ENCODE measurements at regions of chr1 and their contacts with region 1.

Region 1: DNA sequence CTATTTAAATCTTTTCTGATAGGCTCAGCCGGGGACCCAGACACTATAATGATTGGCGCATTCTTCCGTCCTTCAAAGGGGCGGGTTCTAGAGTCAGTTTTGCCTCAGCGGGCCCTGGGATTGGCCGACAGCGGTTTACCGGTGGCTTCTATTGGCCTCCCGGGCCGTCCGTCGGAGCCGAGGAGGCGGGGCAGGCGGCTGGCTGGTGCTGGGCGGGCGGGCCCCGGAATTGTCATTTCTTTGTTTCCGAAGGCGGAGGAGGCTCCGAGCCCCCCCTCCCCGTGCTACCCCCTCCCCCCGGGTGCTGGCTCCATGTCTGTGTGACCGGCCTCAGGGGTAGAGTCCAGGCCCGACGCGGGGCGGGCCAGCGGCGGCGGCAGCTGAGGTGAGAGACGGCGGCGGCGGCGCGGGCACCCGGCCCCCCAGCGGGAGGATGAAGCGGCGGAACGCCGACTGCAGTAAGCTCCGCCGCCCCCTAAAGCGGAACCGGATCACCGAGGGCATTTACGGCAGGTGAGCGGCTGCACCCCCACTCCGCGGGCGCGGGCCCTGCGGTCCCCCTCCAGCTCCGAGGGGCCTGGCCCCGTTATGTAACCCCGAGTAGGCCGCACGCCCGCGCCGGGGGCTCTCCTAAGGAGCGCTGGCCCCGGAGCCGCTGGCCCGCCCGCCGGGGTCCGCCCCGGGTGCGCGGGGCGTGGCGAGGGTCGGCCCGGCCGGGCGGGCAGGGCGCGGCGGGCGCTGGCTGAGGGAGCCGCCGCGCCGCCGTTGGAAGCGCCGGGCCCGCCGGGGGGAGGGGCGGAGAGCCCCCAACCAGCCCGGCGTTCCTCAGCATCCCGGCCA is at the start of gene MACO1:
- DNase-seq: peak; percentile 97 to 98 (median 97)
- ATAC-seq: peak; percentile 96 to 98 (median 97)
- H3K4me3 ChIP-seq: peak within 1 kb of the TSS; percentile 82 to 99 (median 92)
- H3K27ac ChIP-seq: peak within 1 kb of the TSS; percentile 78 to 97 (median 94)
- H3K4me1 ChIP-seq: peaks cover 3 to 49% (median 42%) of the 10 kb centered on the region in 12 donors
- H3K27me3 ChIP-seq: no peaks in the 10 kb centered on the region
- CTCF ChIP-seq: peak in 1 of 12 donors; percentile 10
- POLR2A ChIP-seq: peak in 1 of 2 donors; percentile 34
- total RNA-seq, gene MACO1: 11.2 to 21.0 (median 14.6) TPM

Region 2: GRCh38 chr1:25338188-25338981 is 92.5 kb before region 1 on chr1 and contains the start of gene TMEM50A:
- intact Hi-C with region 1: loop called in 1 of 10 experiments (anchors 10 kb)
- DNase-seq: peak; percentile 91 to 96 (median 92)
- ATAC-seq: peak; percentile 96 to 98 (median 98)
- H3K4me3 ChIP-seq: peak within 1 kb of the TSS; percentile 59 to 99 (median 93)
- H3K27ac ChIP-seq: peak within 1 kb of the TSS; percentile 93 to 99 (median 97)
- H3K4me1 ChIP-seq: peaks cover 0 to 35% (median 24%) of the 10 kb centered on the region in 12 donors
- H3K27me3 ChIP-seq: no peaks in the 10 kb centered on the region
- CTCF ChIP-seq: peak in 1 of 12 donors; percentile 5
- POLR2A ChIP-seq: peak in 1 of 2 donors; percentile 88
- total RNA-seq, gene TMEM50A: 53.5 to 112 (median 94.5) TPM

Region 3: GRCh38 chr1:25469177-25469576 is 38.3 kb after region 1 on chr1:
- intact Hi-C with region 1: loop called in 4 of 10 experiments (anchors 5 kb)
- DNase-seq: no peak
- ATAC-seq: no peak
- H3K4me3 ChIP-seq: no peak overlapping the region
- H3K27ac ChIP-seq: peak overlapping the region in 1 of 12 donors; percentile 75
- H3K4me1 ChIP-seq: peaks cover 4 to 61% (median 43%) of the 10 kb centered on the region in 12 donors
- H3K27me3 ChIP-seq: no peaks in the 10 kb centered on the region
- CTCF ChIP-seq: no peak
- POLR2A ChIP-seq: no peak

Region 4: GRCh38 chr1:25487628-25488027 is 56.7 kb after region 1 on chr1:
- intact Hi-C with region 1: loop called in 2 of 10 experiments (anchors 2 to 5 kb)
- DNase-seq: no peak
- ATAC-seq: no peak
- H3K4me3 ChIP-seq: no peak overlapping the region
- H3K27ac ChIP-seq: no peak overlapping the region
- H3K4me1 ChIP-seq: peaks cover 0 to 15% (median 0%) of the 10 kb centered on the region in 12 donors
- H3K27me3 ChIP-seq: no peaks in the 10 kb centered on the region
- CTCF ChIP-seq: peak in 8 of 12 donors; percentile 22 to 52 (median 42)
- POLR2A ChIP-seq: no peak

Region 5: DNA sequence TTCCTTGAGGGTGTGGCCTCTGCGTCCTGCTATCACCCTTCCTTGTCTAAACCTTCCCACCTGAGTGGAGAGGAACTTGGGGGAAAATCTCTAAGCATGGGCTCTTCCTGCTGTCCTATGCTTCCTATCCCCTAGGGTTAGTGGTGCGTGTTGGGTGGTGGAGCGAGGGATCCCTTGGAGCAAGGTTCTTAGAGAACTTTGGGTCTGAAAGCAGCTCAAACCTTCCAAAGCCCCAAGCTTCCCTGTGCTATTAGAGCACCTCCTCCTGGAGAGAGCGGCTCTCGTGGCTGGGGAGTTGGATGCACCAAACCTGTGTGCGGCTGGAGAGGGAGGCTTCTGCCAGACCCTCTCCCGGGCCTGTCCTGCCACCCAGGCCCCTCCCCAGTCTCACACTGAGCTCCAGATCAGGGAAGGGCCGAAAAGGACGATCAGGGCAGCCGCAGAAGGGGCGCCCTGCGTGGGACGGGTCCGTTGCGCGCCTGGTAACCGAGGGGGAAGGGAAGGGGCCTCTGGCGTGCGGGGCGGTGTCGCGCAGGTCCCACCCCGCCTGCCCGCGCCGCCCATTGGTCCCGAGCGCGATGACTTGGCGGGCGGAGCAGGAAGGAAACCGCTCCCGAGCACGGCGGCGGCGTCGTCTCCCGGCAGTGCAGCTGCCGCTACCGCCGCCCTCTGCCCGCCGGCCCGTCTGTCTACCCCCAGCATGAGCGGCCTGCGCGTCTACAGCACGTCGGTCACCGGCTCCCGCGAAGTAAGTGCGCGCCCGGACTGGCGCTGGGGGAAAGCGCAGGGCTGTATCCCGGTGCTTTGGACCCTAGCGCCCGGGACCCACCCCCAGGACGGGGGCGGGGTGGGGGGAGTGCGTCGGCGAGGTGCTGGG is 848.8 kb after region 1 on chr1 and contains the start of gene SH3BGRL3:
- intact Hi-C with region 1: no loop called
- DNase-seq: peak; percentile 92 to 94 (median 92)
- ATAC-seq: peak; percentile 51 to 85 (median 80)
- H3K4me3 ChIP-seq: peak within 1 kb of the TSS; percentile 56 to 99 (median 74)
- H3K27ac ChIP-seq: peak within 1 kb of the TSS; percentile 60 to 98 (median 92)
- H3K4me1 ChIP-seq: peaks cover 8 to 93% (median 70%) of the 10 kb centered on the region in 12 donors
- H3K27me3 ChIP-seq: no peaks in the 10 kb centered on the region
- CTCF ChIP-seq: peak in 10 of 12 donors; percentile 19 to 67 (median 33)
- POLR2A ChIP-seq: peak; percentile 32 to 94
- total RNA-seq, gene SH3BGRL3: 22.4 to 234 (median 40.0) TPM

Measured in heart left ventricle (tissue), 16 donors.